A549 (cell line): ENCODE measurements at regions of chr1 and their contacts with region 1.

Region 1: DNA sequence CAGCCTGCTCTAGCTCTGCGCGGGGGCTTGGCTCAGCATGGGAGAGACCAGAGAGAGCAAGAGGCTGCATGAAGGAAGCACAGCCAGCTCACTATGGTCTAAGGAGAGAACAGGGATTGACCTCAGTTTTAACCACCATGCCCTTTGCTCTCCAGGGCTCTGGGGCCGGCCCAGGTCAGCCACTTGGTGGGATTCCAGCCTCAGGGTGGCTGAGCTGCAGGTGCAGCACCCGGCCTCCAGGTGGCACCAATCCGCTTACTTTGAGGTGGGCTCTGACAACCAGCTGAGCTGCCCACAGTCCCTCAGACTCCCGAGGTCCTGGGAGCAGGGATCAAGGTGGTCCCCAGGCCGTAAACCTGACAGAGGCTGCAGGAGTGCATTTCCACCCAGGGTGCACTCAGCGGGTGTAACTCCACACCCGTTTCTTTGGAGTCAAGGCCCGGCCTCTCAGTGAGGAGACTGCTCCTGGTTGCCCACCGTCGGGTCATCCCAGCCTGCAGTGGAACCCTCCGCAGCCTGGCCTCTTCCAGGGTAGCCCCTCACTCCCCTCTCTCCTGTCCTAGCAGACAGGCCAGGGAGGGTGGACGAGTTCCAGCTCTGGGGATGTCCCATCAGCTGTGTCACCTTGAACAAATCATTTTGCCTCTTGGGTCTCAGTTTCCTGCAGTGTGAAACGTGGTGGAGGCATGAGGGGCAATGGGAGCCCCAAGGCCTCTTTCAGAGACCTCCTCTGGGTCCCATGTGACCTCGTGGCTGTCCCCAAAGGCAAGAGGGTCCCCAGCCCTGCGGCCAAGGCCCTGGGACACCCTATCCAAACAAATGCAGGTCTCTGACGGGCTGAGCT is 607 bp upstream of the LGR6 start:
- DNase-seq: peak; percentile 60 to 64
- ATAC-seq: peak; percentile 37 to 78; a peak in 5 of 6 replicates
- H3K4me3 ChIP-seq: peak overlapping the region; percentile 36; the same call in 1 of the 3 replicates
- H3K27ac ChIP-seq: peak overlapping the region; percentile 56 to 76; a peak in 5 of 6 replicates
- H3K4me1 ChIP-seq: peaks cover 9% of the 10 kb centered on the region; the same call in 2 of the 3 replicates
- CTCF ChIP-seq: peak; percentile 88
- EP300 ChIP-seq: no peak
- POLR2A ChIP-seq: no peak
- RAD21 ChIP-seq: peak; percentile 87 to 91

Region 2: GRCh38 chr1:202105539-202106276 is 87.3 kb before region 1 on chr1:
- CTCF ChIA-PET with region 1: no interaction called
- POLR2A ChIA-PET with region 1: no interaction called
- DNase-seq: peak; percentile 91 to 93
- ATAC-seq: peak; percentile 85 to 89
- H3K4me3 ChIP-seq: no peak overlapping the region
- H3K27ac ChIP-seq: peak overlapping the region; percentile 91 to 94
- H3K4me1 ChIP-seq: peaks cover 66% of the 10 kb centered on the region
- CTCF ChIP-seq: no peak
- EP300 ChIP-seq: no peak
- POLR2A ChIP-seq: no peak
- RAD21 ChIP-seq: 0 out of 5 replicates have a peak, but pooled peaks of 1 of the 2 experiments have one; percentile 11

Region 3: GRCh38 chr1:202176949-202177927 is 15.8 kb before region 1 on chr1:
- CTCF ChIA-PET with region 1: interaction called, 39 read pairs
- POLR2A ChIA-PET with region 1: no interaction called
- DNase-seq: no peak
- ATAC-seq: peak; percentile 31 to 53; a peak in 4 of 6 replicates
- H3K4me3 ChIP-seq: no peak overlapping the region
- H3K27ac ChIP-seq: no peak overlapping the region
- H3K4me1 ChIP-seq: no peaks in the 10 kb centered on the region
- CTCF ChIP-seq: no peak
- EP300 ChIP-seq: no peak
- POLR2A ChIP-seq: no peak
- RAD21 ChIP-seq: no peak

Region 4: GRCh38 chr1:202221911-202222909 is 29.2 kb after region 1 on chr1:
- CTCF ChIA-PET with region 1: interaction called, 42 read pairs
- POLR2A ChIA-PET with region 1: no interaction called
- DNase-seq: no peak
- ATAC-seq: peak; percentile 67 to 72
- H3K4me3 ChIP-seq: no peak overlapping the region
- H3K27ac ChIP-seq: peak overlapping the region; percentile 46 to 84
- H3K4me1 ChIP-seq: peaks cover 43% of the 10 kb centered on the region
- CTCF ChIP-seq: no peak
- EP300 ChIP-seq: peak; percentile 45 to 73; a peak in 2 of 5 replicates
- POLR2A ChIP-seq: no peak
- RAD21 ChIP-seq: no peak; a peak in 1 of 5 replicates

Region 5: DNA sequence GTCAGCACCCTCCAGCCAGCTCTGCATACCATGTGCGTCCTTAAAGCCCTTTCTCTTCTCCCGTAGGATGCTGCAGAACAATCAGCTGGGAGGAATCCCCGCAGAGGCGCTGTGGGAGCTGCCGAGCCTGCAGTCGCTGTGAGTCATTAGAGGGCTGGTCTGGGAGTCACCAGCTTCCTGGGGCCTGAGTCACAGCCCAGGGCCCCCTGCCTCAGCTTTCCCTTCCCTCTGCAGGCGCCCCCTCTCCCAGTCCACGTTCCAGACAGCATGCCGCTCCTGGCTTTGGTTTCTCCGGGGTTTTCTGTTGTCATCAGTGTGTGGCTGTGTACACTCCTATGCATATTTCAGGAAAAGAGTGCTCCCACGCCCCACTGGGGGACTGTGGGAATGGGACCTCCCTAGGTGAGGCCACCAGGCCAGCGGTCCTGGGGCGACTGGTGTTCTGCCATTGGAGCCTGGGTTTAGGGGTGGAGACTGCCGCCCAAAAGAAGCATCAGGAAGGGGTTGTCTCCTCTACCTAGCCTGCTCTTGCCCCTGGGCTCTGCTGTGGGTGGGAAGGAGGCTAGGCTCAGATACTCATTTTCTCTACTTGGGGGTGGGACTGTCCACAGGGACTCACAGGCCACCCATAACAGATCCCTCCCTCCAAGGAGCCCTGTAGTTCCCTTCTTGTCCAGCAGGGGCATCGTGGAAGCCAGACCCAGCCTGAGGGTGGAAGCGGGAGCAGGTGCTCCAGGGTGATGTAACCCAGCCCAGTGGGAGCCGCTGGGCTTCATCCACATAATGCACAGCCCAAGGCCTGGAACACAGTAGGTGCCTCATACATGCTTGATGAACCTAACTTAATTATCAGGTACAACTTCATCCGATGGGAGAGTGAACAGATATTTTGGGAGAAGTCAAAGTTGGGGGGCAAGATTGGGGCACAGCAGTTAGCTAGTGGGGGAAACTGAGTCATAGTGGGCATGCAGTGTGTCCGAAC is 43.2 kb after region 1 on chr1:
- CTCF ChIA-PET with region 1: interaction called, 50 read pairs
- POLR2A ChIA-PET with region 1: interaction called, 6 read pairs
- DNase-seq: peak; percentile 92 to 98
- ATAC-seq: peak; percentile 89 to 92
- H3K4me3 ChIP-seq: peak overlapping the region; percentile 26
- H3K27ac ChIP-seq: peak overlapping the region; percentile 77 to 88
- H3K4me1 ChIP-seq: peaks cover 29% of the 10 kb centered on the region
- CTCF ChIP-seq: peak; percentile 68
- EP300 ChIP-seq: no peak
- POLR2A ChIP-seq: no peak
- RAD21 ChIP-seq: peak; percentile 21 to 47; a peak in 3 of 5 replicates

Region 6: DNA sequence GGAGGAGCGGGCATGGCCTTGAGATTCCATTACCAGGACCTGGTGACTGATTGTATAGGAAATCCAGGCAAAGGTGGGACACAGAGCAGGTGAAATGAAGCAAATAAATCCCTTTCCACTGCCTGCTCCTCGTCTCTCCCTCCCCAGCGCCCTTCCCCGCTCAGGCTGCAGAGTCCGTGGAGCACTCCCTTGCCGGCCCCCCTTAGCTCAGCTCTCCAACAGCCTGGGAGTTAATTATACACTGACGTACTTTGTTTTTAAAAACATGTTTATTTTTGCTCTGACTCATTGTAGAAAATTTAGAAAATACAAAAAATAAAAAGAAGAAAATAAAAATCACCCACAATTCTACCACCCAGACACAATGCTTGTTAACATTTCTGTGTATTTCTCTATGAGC is 62.4 kb after region 1 on chr1:
- CTCF ChIA-PET with region 1: interaction called, 11 read pairs
- POLR2A ChIA-PET with region 1: no interaction called
- DNase-seq: no peak
- ATAC-seq: no peak
- H3K4me3 ChIP-seq: no peak overlapping the region
- H3K27ac ChIP-seq: no peak overlapping the region
- H3K4me1 ChIP-seq: 0 out of 3 replicates have a peak, but pooled peaks cover 5% of the 10 kb centered on the region
- CTCF ChIP-seq: no peak
- EP300 ChIP-seq: no peak
- POLR2A ChIP-seq: no peak
- RAD21 ChIP-seq: no peak

Region 7: GRCh38 chr1:202283379-202283844 is 90.4 kb after region 1 on chr1:
- CTCF ChIA-PET with region 1: interaction called, 19 read pairs
- POLR2A ChIA-PET with region 1: no interaction called
- DNase-seq: peak; percentile 28 to 33
- ATAC-seq: peak; percentile 52 to 62
- H3K4me3 ChIP-seq: no peak overlapping the region; the same call in 2 of the 3 replicates
- H3K27ac ChIP-seq: peak overlapping the region; percentile 74 to 82
- H3K4me1 ChIP-seq: peaks cover 58% of the 10 kb centered on the region
- CTCF ChIP-seq: no peak
- EP300 ChIP-seq: peak in 1 of 2 experiments; percentile 57; a peak in 1 of 5 replicates
- POLR2A ChIP-seq: no peak
- RAD21 ChIP-seq: no peak

Region 8: DNA sequence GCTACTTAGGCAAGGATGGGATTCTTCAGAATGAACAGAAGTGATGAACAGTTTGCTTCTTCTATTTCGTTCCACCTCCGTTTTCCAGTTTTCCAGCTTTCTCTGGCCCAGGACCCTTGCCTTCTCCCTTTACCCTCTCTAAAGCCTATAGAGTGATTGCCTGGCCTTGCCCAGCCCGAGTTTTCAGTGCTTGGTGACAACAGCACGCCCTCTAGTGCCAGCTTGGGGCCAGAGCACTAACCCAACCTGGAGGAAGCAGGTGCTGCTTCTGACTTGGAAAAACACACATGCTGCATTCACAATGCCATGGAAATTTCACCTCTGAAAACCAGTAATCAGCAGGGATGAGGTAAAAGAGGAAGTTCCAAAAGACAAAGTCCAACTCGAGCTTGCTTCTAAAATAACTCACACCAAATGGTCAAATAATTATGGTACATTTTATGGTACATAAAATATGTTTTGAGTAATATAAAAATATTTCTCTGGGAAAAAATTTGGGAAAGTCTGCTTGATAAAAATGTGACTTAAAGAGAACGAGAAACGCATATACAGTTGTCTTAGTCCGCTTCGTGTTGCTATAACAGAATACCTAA is 122.7 kb after region 1 on chr1:
- CTCF ChIA-PET with region 1: interaction called, 350 read pairs
- POLR2A ChIA-PET with region 1: interaction called, 4 read pairs
- DNase-seq: peak; percentile 80 to 89
- ATAC-seq: peak; percentile 85 to 96; a peak in 5 of 6 replicates
- H3K4me3 ChIP-seq: no peak overlapping the region
- H3K27ac ChIP-seq: peak overlapping the region in 1 of 2 experiments; percentile 26; a peak in 2 of 6 replicates
- H3K4me1 ChIP-seq: peaks cover 5% of the 10 kb centered on the region; the same call in 1 of the 3 replicates
- CTCF ChIP-seq: peak; percentile 98
- EP300 ChIP-seq: no peak
- POLR2A ChIP-seq: no peak
- RAD21 ChIP-seq: peak; percentile 98 to 99